ENCODE measurements at regions of chr16 and their contacts with region 1.

Region 1: DNA sequence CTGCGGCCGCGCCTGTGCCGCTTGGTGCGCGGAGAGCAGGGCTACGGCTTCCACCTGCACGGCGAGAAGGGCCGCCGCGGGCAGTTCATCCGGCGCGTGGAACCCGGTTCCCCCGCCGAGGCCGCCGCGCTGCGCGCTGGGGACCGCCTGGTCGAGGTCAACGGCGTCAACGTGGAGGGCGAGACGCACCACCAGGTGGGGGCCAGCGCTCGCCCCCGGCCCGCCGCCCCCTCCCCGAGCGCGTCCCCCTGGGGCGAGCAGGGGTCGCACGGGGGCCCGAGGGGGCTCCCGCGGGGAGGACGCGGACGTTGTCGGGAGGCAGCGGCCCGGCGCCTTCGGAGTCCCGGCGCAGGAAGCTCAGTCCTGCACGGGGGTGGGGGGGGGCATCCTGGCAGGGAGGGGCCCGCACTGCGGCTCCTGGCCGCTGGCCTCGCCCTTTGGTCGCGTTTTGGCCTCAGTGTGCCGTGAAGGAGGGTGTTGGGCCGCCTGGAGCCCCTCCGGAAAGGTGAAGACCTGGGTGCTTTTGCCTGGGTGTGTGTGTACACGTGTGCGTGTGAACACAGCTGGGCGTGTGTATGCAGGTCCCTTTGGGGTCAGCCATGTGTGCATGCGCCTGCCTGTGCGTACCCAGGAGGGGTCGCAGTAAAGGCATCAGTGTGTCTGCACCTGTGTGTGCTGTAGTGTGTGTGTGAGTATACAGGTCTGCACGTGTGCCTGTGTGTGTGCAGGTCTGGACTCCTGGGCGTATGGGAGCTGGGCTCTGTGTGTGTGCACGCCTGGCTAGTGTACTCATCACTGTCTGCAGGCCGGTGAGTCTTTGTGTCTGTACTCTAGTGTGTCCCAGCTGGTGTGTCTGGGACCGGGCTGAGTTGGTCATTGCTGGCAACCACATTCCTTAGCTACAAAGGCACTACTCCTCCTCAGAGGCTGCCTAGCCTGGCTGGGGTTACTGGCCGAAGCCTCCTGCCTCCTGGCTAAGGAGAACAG is 615 bp downstream of the NHERF2 start:
- DNase-seq: peak; percentile 80
- H3K4me3 ChIP-seq: peak overlapping the region; percentile 43 to 87 (median 69)
- H3K27ac ChIP-seq: peak overlapping the region in 7 of 8 donors; percentile 63 to 90 (median 87)
- H3K4me1 ChIP-seq: peaks cover 24 to 98% (median 83%) of the 10 kb centered on the region in 6 donors
- H3K27me3 ChIP-seq: peaks cover 0 to 48% (median 7%) of the 10 kb centered on the region in 7 donors
- CTCF ChIP-seq: no peak
- POLR2A ChIP-seq: no peak

Region 2: DNA sequence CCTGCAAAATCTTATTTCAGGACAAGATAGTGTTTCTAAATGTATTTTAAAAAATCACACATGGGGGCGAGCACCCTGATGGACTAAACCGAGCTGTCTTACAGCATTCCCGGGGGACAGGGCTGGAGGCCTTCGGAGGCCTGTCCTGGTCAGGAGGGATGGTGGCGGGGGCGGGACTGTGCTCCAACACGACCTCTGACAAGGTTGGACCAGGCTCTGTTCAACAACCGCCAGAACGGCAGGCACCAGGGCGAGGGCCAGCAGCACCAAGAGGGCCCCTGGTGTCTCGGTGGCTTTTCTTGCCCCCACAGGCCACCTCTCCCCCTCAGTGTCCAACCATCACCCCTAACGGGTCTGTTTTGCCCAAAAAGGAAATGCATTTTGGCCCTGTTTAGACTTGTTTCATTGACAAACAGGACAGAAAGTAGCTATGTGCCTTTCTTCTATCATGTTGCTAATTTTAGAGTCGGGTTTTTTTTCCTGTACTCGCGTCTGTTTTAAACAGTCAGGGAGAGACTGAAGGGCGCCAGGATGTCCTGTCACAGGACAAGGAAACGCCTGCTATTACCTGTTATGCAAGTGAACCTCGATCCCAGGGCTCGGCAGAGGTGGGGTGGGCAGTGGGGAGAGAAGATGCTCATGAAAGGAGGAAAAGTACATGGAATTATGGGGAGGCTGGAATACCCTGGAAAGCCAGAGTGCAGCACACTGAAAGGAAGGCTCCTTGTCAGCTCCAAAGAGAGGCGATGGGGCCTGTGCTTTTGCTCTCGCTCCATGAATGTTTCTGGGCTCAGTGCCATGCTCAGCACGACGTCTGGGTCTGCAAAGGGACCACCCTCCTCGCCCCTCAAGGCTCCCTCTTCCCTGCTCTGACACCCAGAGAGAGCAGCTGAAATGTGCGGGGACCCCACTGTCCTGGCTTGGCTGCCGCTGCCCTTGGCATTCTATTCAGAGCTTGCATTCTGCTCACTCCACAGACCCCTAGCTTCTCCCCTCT is 482.0 kb before region 1 on chr16:
- intact Hi-C with region 1: no loop called
- DNase-seq: no peak
- H3K4me3 ChIP-seq: peak overlapping the region in 2 of 8 donors; percentile 10 to 17
- H3K27ac ChIP-seq: peak overlapping the region; percentile 72 to 90 (median 81)
- H3K4me1 ChIP-seq: peaks cover 47 to 93% (median 72%) of the 10 kb centered on the region in 6 donors
- H3K27me3 ChIP-seq: no peaks in the 10 kb centered on the region
- CTCF ChIP-seq: no peak
- POLR2A ChIP-seq: no peak

Region 3: DNA sequence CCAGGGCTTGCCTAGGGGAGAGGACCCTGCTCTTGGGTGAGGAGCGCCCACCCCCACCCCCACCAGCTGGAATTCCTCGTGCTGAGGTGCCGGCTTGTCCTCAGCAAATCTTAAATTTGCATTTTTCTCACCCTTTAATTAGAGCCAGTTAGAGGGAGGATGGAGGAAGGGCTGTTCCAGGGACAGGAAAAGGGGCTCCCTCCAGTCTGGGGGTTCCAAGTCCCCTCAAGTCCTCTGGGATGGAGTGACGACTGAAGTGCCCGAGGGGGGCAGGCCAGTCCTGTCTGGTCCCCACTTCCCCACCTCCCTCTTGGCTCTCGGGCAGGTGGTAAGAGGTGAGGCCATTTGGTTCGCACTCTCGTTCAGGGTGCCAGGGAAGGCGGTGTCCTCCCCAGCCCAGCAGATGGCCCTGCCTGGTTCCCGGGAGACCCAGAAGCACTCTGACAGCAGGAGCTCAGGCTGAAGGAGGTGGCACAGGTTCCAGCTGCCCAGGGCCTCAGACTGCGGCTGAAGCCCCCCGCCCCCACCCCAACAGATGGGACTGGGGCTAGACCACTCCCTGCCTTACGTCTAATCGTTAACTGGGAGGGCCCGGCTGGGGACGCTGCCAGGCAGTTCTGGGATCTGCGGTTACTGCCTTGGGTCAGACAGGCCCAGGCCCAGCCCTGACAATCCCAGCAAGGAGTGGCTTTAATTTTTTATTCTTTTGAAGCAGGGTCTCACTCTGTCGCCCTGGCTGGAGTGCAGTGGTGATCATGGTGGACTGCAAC is 123.3 kb after region 1 on chr16:
- intact Hi-C with region 1: loop called (anchors 5 kb)
- DNase-seq: peak; percentile 68
- H3K4me3 ChIP-seq: no peak overlapping the region
- H3K27ac ChIP-seq: no peak overlapping the region
- H3K4me1 ChIP-seq: peaks cover 45 to 77% (median 72%) of the 10 kb centered on the region in 6 donors
- H3K27me3 ChIP-seq: peaks cover 0 to 21% (median 0%) of the 10 kb centered on the region in 7 donors
- CTCF ChIP-seq: no peak
- POLR2A ChIP-seq: no peak